Dorsolateral prefrontal cortex (tissue), 120 donors: ENCODE measurements at regions of chr1 and their contacts with region 1.

Region 1: DNA sequence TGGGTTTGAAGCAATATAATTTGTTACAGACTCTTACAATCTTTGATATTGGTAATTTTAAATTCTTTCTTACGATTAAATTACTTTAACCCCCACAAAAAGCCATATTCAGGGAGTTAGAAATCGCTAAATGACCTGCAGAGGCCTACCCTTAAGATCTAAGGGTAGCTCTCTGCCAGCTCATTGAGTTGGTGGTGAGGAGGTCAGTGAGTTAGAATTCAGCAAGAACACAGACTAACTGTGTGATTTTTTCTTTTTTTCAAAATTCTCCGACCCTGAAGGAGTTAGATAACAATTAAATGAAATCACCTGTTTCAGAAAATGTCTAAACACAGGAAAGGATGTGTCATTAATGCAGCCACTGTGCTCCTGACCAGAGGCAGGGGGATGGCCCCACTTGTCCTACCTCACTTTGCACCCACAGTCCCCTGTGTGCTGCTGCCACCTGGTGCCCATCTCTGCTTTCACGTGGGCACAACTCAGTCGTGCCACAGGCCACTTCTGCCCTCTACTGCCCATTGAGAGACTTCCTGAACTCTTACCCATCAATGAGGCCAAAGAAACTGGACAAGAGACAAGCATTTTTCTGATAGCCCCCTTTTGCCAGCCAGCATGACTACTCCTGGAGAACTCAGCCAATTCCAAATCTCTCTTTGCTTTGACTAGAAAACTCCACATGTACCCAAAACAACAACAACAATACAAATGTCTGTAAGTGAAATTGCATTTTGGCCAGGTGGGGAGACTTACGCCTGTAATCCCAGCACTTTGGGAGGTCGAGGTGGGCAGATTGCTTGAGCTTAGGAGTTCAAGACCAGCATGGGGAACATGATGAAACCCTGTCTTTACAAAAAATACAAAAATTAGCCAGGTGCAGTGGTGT is 8.4 kb downstream of the CFAP45 start:
- DNase-seq: peak; percentile 74 to 88 (median 84)
- H3K4me3 ChIP-seq: no peak overlapping the region
- H3K27ac ChIP-seq: no peak overlapping the region
- H3K27me3 ChIP-seq: peaks cover 0 to 4% (median 0%) of the 10 kb centered on the region in 45 donors
- CTCF ChIP-seq: peak; percentile 84 to 100 (median 99)

Region 2: DNA sequence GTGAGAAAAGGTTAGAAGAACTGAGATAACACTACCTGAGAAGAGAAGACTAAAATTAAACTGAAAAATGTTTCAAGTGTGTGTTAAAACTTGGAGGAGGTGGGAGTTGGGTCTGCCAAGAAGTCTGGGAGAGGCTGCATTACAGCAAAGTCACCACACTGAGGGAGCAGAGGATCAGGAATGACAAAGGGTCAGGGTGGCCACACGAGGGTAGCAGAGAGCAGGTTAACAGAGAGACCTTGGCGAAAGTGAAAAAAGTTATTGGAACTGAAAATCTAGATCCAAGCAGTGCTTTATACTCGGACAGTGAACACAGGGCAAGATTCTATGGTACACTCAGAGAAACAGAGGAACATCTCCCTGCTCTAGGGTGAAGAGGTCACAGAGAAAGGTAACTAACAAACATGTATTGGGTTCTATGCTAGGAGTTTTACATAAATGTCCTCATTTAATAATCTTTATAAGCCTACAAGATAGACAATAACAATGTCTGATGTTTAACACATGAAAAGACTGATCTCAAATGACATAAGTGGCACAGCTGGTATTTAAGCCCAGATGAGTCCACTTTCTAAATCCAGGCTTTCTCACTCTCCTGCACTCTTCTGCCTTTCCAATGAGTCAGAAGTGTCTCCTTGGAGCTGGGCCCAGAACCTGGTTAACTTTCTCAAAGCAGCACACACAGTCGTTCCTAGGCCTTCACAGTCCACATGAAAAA is 730.4 kb before region 1 on chr1:
- intact Hi-C with region 1: loop called in 1 of 2 experiments (anchors 10 kb)
- DNase-seq: peak; percentile 43 to 80 (median 75)
- H3K4me3 ChIP-seq: no peak overlapping the region
- H3K27ac ChIP-seq: peak overlapping the region in 8 of 59 donors; percentile 10 to 76 (median 59)
- H3K27me3 ChIP-seq: peaks cover 0 to 12% (median 0%) of the 10 kb centered on the region in 45 donors
- CTCF ChIP-seq: peak; percentile 74 to 100 (median 98)

Region 3: DNA sequence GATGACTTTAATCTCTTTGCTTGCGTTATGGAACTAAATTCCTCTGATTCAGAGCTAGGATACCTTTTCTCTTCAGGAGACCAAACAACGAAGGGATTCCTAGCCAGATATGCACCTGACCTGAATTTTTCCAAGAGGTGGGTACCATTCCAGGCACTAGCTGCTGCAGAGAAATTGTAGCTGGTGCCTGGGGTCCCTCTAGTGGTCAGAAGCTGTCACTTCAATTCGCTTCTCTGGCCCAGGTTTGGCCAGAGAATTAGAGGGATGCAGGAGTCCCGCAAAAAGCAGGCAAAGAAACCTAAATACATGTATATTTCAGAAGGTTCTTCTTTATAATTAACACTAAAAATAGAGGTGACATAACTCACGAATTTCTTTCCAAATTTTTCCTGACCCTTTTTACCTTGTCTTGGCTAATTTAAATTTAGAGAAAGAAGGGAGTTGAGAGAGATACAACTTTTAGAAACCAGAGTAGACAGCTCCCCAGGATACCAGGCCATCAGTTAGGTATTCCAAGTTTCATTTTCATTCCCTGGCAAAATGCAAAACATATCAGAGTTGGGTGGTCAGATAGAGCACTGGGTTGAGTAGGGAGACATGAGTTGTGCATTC is 677.3 kb before region 1 on chr1:
- intact Hi-C with region 1: loop called in 1 of 2 experiments (anchors 2 kb)
- DNase-seq: peak in 6 of 10 donors; percentile 42 to 77 (median 56)
- H3K4me3 ChIP-seq: no peak overlapping the region
- H3K27ac ChIP-seq: no peak overlapping the region
- H3K27me3 ChIP-seq: peaks cover 0 to 31% (median 0%) of the 10 kb centered on the region in 45 donors
- CTCF ChIP-seq: peak; percentile 72 to 97 (median 91)

Region 4: DNA sequence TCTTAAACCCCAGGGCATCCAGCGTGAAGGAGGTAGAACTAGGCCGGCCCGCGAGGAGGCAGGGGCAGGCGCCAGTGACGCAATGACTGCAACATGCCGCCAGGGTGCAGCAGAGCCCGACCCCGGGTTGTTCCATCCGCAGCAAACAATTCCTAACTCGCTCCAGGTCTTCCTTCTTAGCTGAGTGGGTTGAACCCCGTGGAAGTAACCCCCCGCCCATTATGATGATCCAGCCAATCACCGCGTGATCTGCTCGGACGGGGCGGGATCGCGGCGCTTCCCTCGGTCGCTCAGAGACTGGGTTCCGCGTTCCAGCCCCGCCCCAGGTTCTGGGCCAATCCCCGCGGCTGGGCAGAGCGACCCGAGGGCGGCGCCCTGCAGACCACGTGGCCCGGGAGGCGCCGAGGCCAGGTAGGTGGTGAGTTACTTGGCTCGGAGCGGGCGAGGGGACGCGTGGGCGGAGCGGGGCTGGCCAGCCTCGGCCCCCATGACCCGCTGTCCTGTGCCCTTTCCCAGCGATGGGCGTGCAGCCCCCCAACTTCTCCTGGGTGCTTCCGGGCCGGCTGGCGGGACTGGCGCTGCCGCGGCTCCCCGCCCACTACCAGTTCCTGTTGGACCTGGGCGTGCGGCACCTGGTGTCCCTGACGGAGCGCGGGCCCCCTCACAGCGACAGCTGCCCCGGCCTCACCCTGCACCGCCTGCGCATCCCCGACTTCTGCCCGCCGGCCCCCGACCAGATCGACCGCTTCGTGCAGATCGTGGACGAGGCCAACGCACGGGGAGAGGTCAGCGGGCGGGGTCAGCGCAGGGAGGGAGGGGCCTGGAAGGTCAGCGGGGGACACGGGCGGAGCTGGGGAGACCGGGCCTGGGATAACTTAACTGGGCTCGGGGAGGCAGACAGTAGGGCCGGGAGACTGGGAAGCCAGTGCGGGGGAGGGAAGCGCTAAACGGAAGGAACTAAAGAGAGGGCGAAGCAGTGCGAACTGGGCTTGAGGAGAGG is 110.6 kb before region 1 on chr1 and contains the start of gene DUSP23:
- intact Hi-C with region 1: loop called (anchors 2 to 5 kb)
- DNase-seq: peak; percentile 91 to 98 (median 96)
- H3K4me3 ChIP-seq: peak within 1 kb of the TSS; percentile 51 to 97 (median 86)
- H3K27ac ChIP-seq: peak within 1 kb of the TSS in 53 of 59 donors; percentile 11 to 87 (median 74)
- H3K27me3 ChIP-seq: no peaks in the 10 kb centered on the region
- CTCF ChIP-seq: peak; percentile 68 to 99 (median 96)
- total RNA-seq, gene DUSP23: 8.3 to 30.2 (median 16.0) TPM

Region 5: GRCh38 chr1:159798893-159799292 is 92.6 kb before region 1 on chr1:
- intact Hi-C with region 1: loop called in 1 of 2 experiments (anchors 1 kb)
- DNase-seq: peak in 4 of 10 donors; percentile 18 to 55 (median 33)
- H3K4me3 ChIP-seq: no peak overlapping the region
- H3K27ac ChIP-seq: no peak overlapping the region
- H3K27me3 ChIP-seq: peaks cover 0 to 3% (median 0%) of the 10 kb centered on the region in 45 donors
- CTCF ChIP-seq: peak in 54 of 56 donors; percentile 50 to 88 (median 70)

Region 6: DNA sequence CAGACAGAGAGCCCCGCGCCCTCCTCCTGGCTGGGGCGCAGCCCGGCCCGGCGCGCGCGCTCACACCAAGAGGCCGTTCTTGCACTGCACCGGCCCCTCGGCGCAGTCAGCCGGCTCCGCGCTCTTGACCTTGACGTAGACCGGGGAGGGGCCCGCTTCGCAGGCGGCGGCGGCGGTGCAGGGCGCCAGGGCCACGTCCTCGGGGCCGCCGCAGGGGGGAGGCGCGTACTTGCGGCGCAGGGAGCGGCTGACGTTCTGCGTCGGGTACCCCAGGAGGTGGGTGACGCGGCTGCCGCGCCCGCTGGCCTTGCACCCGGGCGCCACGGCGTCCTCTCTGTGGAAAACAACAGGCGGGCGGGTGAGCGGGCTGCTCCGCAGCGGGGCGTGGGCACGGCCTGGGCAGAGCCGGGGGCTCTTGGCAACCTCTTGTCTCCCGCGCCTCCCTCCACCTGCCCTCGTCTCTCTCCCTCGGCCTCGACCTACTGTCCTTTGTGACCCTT is 36.8 kb before region 1 on chr1:
- intact Hi-C with region 1: loop called in 1 of 2 experiments (anchors 5 kb)
- DNase-seq: peak; percentile 62 to 89 (median 76)
- H3K4me3 ChIP-seq: peak overlapping the region; percentile 37 to 96 (median 81)
- H3K27ac ChIP-seq: peak overlapping the region; percentile 60 to 96 (median 91)
- H3K27me3 ChIP-seq: no peaks in the 10 kb centered on the region
- CTCF ChIP-seq: peak in 26 of 56 donors; percentile 11 to 46 (median 26)

Region 7: GRCh38 chr1:160117709-160118183 is 226.2 kb after region 1 on chr1:
- intact Hi-C with region 1: no loop called
- DNase-seq: peak in 9 of 10 donors; percentile 70 to 86 (median 77)
- H3K4me3 ChIP-seq: peak overlapping the region; percentile 16 to 69 (median 54)
- H3K27ac ChIP-seq: peak overlapping the region; percentile 5 to 93 (median 80)
- H3K27me3 ChIP-seq: no peaks in the 10 kb centered on the region
- CTCF ChIP-seq: peak in 2 of 56 donors; percentile 12 to 20